ENCODE measurements at regions of chr7 and their contacts with region 1.

Region 1: DNA sequence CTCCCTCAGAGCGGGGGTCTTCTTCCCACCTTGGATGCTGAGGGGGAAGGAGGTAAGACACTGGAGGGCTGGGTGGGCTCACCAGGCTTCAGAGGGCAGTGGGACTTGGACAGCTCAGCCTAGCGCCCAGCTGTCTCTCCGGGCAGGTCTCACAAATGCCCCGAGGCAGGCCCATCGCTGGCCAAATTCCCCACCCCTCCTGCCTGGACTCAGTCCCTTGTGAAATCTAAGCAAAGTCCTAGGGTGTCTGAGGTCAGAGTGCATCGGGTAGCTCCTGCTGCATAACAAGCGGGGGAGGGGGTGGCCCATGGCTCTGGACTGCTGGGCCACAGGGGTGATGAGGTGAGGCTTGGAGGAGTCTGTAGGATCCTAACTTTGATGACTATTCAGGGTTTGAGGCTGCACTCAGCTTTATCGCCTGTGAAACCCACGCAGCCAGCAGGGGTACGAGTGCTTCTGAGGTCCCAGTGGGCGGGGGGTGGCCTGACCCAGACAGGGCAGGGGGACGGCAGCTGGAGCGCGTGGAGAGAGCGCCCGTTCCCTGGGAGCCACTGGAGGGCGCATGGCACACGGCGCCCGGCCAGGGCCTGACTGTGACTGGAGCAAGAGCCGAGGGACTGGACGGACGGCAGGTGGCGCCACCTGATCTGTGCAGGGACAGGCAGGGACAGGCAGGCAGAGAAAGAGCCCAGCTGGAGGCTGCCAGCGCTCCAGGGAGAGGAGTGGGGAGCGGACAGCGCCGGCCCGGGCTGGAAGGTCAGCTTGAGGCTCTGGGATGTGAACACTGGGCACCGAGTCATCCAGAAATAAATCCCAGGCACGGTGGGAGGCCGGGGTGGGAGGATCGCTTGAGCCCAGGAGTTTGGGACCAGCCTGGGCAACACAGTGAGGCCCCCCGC is 10.0 kb downstream of the CYP2W1 start:
- DNase-seq: peak; percentile 91

Region 2: DNA sequence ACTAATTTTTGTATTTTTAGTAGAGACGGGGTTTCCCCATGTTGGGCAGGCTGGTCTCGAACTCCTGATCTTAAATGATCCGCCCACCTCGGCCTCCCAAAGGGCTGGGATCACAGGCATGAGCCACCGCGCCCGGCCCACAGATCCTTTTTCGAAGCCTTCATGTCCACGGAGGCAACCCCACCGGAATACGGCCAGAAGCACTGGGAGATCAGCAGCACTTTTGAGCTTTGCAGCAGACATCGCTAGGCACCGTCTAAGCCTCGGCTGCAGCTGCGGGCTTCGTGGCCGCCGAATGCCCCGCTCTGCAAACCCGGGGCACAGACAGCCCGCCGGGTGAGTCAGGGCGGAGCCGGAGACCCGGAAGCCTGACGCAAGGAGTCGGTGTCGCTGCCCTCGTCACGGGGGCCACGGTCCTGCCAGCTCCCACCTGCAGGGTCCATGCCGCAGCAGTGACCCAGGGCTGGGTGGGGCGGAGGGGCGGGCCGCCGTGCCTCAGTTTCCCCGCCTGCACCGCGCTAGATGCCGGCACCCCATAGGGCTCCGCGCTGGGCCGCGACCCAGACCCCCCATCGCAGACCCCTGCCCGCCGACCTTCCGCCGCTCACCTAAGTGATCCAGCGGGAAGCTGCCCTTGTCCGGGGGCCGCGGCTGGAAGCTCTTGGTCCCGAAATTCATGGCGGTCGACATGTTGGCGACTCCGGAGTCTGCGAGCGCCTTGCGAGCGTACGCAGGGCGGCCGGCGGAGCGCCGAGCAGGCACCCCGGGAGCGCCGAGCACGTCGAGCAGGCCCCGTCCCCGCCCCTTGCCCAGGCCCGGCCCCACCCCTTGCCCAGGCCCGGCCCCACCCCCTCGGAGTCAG is 17.9 kb before region 1 on chr7 and contains the start of gene COX19:
- CTCF ChIA-PET with region 1: interaction called, 11 read pairs
- POLR2A ChIA-PET with region 1: interaction called, 4 read pairs
- DNase-seq: peak; percentile 95

Region 3: DNA sequence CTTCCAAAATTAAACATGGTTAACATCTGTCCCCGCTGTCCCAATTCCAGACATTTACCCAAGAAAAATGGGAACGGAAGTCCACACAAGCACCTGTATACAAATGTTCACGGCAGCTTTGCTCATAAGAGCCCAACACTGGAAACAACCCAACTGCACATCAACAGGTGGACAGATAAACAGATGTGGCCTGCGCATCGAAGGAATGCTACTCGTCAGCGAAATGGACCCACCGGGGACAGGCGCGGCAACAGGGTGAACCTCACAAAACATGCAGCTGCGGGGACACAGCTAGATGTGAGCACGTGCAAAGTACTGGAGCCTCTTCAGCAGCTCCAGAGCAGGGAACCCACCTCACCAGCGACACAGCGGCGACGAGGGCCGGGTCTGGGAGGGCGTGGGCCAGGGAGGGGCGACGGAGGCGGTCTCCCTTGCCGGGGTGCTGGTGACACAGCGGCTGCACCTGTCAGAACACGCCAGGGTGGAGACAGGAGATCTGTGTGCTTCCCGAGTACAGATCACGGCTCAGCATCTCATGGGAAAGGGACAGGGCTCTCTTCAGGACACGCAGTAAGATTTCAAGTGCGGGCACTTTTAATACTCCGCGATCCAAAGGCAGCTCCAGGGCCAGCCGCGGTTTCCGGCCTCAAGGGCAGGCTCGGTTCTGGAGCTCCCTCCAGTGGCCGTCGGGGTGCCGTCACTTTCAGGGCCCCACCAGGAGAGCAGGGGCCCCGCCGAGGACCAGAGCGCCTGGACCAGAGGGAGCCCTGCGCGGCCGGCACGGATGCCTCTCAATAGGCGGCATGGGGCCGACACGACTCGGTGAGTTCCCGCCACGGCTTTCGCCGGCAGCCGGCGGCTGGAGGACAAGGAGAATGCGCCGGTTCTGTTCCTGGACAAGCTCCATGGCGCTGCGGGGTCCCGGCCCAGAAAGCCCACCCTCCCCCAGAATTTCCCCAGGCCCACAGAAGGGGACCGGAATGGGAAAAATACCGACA is 72.6 kb after region 1 on chr7:
- CTCF ChIA-PET with region 1: interaction called, 47 read pairs
- POLR2A ChIA-PET with region 1: no interaction called
- DNase-seq: peak; percentile 85

Region 4: DNA sequence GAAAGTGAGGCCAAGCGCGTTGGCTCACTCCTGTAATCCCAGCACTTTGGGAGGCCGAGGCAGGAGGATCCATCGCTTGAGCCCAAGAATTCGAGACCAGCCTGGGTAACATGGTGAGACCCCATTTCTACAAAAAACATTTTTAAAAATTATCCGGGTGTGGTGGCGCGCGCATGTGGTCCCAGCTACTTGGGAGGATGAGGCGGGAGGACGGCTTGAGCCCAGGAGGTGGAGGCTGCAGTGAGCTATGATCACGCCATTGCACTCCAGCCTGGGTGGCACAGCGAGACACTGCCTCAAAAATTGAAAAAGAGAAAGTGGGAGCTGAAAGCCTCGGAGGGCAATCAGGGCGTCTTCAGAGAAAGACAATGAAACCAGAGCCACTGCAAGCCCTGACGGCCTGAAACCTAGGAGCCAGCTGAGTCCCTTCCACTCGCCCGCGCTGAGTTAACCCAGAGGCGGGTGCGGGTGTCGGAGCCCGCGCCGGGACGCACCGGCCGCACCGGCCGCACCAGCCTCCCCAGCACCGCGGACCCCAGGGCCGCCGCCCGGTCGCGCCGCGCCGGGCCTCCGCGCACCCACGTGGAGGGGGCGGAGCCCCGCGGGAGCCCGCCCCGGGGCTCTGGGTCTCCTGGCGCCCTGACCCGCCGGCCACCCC is 144.7 kb after region 1 on chr7:
- CTCF ChIA-PET with region 1: interaction called, 13 read pairs
- POLR2A ChIA-PET with region 1: no interaction called
- DNase-seq: no peak

Region 5: DNA sequence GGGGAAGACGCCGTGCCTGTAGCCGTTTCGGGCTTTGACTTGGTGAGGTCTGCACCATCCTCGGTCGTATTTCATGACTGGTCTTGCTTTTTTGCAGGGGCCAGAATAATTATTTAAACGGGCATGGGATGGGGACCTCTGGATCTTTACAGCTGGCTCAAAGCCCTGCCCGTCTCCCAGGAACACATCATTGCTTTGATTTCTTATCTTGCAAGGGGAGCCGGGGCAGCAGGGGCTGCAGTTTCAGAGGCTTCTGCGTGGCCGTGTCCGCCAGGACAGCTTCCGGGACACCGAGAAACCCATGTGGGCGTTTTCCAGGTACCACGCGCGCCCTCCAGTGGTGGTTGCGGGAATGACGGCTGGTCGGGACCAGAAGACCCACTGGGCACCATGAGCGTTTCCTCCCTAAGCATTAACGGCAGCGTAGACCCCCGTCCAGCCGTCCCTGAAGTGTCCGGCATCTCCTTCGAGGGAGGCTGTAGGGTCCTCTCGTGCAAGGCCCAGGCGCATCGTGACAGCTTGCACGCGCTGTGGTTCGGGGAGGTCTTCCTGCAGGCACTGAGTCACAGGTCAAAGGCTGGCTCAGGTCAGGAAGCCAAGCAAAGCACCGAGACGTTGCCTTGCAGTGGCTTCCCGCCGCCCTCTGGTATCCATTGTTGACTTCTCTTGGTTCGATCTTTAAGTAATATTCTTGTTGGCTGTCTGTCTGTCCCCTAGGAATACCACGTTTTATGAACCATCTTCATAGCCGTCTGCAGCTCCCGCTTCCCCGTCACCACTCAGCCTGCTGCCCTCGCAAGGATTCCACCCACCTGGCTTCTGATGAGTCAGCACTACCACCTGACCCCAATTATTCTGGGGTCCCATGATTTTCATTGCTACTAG is 183.3 kb after region 1 on chr7:
- CTCF ChIA-PET with region 1: interaction called, 21 read pairs
- POLR2A ChIA-PET with region 1: no interaction called
- DNase-seq: peak; percentile 84

Measured in HEK293T (cell line).